ENCODE measurements at regions of chr5 and their contacts with region 1.

Region 1: GRCh38 chr5:129767906-129768380 is 20.0 kb downstream of the MINAR2 start:
- DNase-seq: peak; percentile 1 to 79 (median 26)
- ATAC-seq: peak; percentile 82
- H3K4me3 ChIP-seq: no peak overlapping the region
- H3K4me3 Mint-ChIP-seq: no peak overlapping the region
- H3K27ac ChIP-seq: no peak overlapping the region
- H3K27ac Mint-ChIP-seq: no peak overlapping the region
- H3K4me1 ChIP-seq: peaks cover 2% of the 10 kb centered on the region
- H3K4me1 Mint-ChIP-seq: no peaks in the 10 kb centered on the region
- H3K27me3 ChIP-seq: no peaks in the 10 kb centered on the region
- H3K27me3 Mint-ChIP-seq: peaks cover 4% of the 10 kb centered on the region
- CTCF ChIP-seq: peak; percentile 94

Region 2: GRCh38 chr5:129852747-129853352 is 84.9 kb after region 1 on chr5:
- CTCF ChIA-PET with region 1: no interaction called
- POLR2A ChIA-PET with region 1: no interaction called
- intact Hi-C with region 1: loop called in 1 of 2 experiments (anchors 1 kb)
- DNase-seq: peak; percentile 38 to 71 (median 54)
- ATAC-seq: no peak
- H3K4me3 ChIP-seq: no peak overlapping the region
- H3K4me3 Mint-ChIP-seq: no peak overlapping the region
- H3K27ac ChIP-seq: no peak overlapping the region
- H3K27ac Mint-ChIP-seq: no peak overlapping the region
- H3K4me1 ChIP-seq: no peaks in the 10 kb centered on the region
- H3K4me1 Mint-ChIP-seq: no peaks in the 10 kb centered on the region
- H3K27me3 ChIP-seq: no peaks in the 10 kb centered on the region
- H3K27me3 Mint-ChIP-seq: peaks cover 31% of the 10 kb centered on the region
- CTCF ChIP-seq: peak; percentile 98

Region 3: GRCh38 chr5:130424341-130424740 is 656.4 kb after region 1 on chr5:
- CTCF ChIA-PET with region 1: no interaction called
- POLR2A ChIA-PET with region 1: no interaction called
- intact Hi-C with region 1: no loop called
- DNase-seq: no peak
- ATAC-seq: no peak
- H3K4me3 ChIP-seq: no peak overlapping the region
- H3K4me3 Mint-ChIP-seq: no peak overlapping the region
- H3K27ac ChIP-seq: no peak overlapping the region
- H3K27ac Mint-ChIP-seq: no peak overlapping the region
- H3K4me1 ChIP-seq: no peaks in the 10 kb centered on the region
- H3K4me1 Mint-ChIP-seq: no peaks in the 10 kb centered on the region
- H3K27me3 ChIP-seq: no peaks in the 10 kb centered on the region
- H3K27me3 Mint-ChIP-seq: peaks cover 8% of the 10 kb centered on the region
- CTCF ChIP-seq: no peak